Activated naive CD4-positive, alpha-beta T cell treated with anti-CD3 and anti-CD28 coated beads, Interleukin-2, amount 10 ng/mL, durations not matched to agents 7 days and 5 days (primary cell): ENCODE measurements at regions of chr16 and their contacts with region 1.

Region 1: GRCh38 chr16:67521095-67521804 is 7.4 kb upstream of the RIPOR1 start:
- DNase-seq: peak; percentile 99
- H3K4me3 Mint-ChIP-seq: peak overlapping the region; percentile 81
- H3K27ac Mint-ChIP-seq: peak overlapping the region; percentile 97
- H3K4me1 Mint-ChIP-seq: peaks cover 50% of the 10 kb centered on the region
- H3K27me3 Mint-ChIP-seq: peaks cover 65% of the 10 kb centered on the region

Region 2: GRCh38 chr16:67480833-67481560 is 40.3 kb before region 1 on chr16 and contains the start of gene ATP6V0D1:
- CTCF ChIA-PET with region 1: interaction called, 74 read pairs
- DNase-seq: peak; percentile 99
- H3K4me3 Mint-ChIP-seq: peak within 1 kb of the TSS; percentile 94
- H3K27ac Mint-ChIP-seq: peak within 1 kb of the TSS; percentile 97
- H3K4me1 Mint-ChIP-seq: peaks cover 47% of the 10 kb centered on the region
- H3K27me3 Mint-ChIP-seq: no peaks in the 10 kb centered on the region

Region 3: DNA sequence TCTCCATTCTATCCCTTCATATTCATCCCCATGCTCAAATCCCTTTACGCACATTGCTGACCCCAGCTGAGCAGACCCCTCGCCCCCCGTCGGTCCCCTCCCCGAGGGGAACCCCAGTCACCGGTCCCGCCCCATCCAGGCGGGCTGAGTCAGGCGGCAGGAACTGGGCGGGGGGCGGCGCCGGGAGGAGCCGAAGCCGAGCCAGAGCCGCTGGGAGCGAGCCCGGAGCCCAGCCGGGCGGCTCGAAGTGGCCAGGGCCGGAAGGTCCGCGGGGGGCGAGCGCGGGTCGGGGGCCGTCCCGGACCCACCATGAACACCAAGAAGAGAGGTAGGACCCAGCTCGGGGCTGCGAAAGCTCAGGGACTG is 16.0 kb after region 1 on chr16:
- CTCF ChIA-PET with region 1: interaction called, 51 read pairs
- DNase-seq: peak; percentile 73
- H3K4me3 Mint-ChIP-seq: peak overlapping the region; percentile 76
- H3K27ac Mint-ChIP-seq: no peak overlapping the region
- H3K4me1 Mint-ChIP-seq: peaks cover 30% of the 10 kb centered on the region
- H3K27me3 Mint-ChIP-seq: peaks cover 65% of the 10 kb centered on the region

Region 4: DNA sequence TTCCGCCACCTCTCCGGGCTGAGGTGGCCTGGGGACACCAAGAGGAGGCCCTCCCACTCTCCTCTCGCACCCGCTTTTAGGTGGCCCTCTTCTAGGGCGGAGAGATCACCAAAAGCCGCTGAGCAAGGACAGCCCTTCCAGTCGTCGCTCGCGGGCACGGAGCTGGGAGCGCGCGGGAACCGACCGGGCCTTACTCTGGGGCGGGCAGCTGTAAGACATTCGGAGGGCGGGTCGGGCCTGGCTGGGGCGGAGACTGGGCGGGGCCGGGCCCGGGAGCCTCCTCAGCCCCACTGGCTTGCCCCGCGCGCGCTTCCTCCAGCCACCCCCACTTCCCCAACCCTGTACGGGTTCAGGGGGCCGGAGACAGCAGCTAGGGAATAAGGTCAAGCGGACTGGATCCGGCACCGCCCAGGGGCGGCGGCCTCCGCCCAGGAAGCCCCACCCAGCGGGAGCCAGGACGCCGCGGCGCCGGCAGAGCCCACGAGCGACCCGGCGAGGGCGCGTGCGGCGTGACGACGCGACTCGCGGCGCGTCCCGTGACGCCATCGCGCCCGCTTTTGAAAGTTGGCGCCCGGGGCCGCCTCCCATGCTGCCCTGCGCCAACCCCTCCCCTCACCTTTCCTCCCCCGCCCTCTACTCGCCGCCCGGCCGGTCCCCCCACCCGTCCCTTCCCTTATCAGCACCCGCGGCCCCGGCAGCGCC is 40.7 kb after region 1 on chr16:
- CTCF ChIA-PET with region 1: interaction called, 19 read pairs
- DNase-seq: peak; percentile 99
- H3K4me3 Mint-ChIP-seq: peak overlapping the region; percentile 89
- H3K27ac Mint-ChIP-seq: peak overlapping the region; percentile 97
- H3K4me1 Mint-ChIP-seq: peaks cover 57% of the 10 kb centered on the region
- H3K27me3 Mint-ChIP-seq: no peaks in the 10 kb centered on the region

Region 5: GRCh38 chr16:67641779-67642708 is 120.8 kb after region 1 on chr16:
- CTCF ChIA-PET with region 1: interaction called, 76 read pairs
- DNase-seq: no peak
- H3K4me3 Mint-ChIP-seq: no peak overlapping the region
- H3K27ac Mint-ChIP-seq: no peak overlapping the region
- H3K4me1 Mint-ChIP-seq: peaks cover 25% of the 10 kb centered on the region
- H3K27me3 Mint-ChIP-seq: no peaks in the 10 kb centered on the region

Region 6: GRCh38 chr16:67667817-67668494 is 146.7 kb after region 1 on chr16:
- CTCF ChIA-PET with region 1: interaction called, 151 read pairs
- DNase-seq: peak; percentile 93
- H3K4me3 Mint-ChIP-seq: peak overlapping the region; percentile 87
- H3K27ac Mint-ChIP-seq: peak overlapping the region; percentile 86
- H3K4me1 Mint-ChIP-seq: peaks cover 32% of the 10 kb centered on the region
- H3K27me3 Mint-ChIP-seq: peaks cover 4% of the 10 kb centered on the region

Region 7: GRCh38 chr16:67928561-67929364 is 407.5 kb after region 1 on chr16:
- CTCF ChIA-PET with region 1: interaction called, 11 read pairs
- DNase-seq: peak; percentile 88
- H3K4me3 Mint-ChIP-seq: no peak overlapping the region
- H3K27ac Mint-ChIP-seq: peak overlapping the region; percentile 58
- H3K4me1 Mint-ChIP-seq: peaks cover 4% of the 10 kb centered on the region
- H3K27me3 Mint-ChIP-seq: no peaks in the 10 kb centered on the region